ENCODE measurements at regions of chr12 and their contacts with region 1.

Region 1: GRCh38 chr12:64347630-64348029 is 42.9 kb downstream of the C12orf56 start:
- DNase-seq: no peak
- H3K4me3 ChIP-seq: no peak overlapping the region
- H3K27ac ChIP-seq: no peak overlapping the region
- H3K4me1 ChIP-seq: no peaks in the 10 kb centered on the region
- H3K27me3 ChIP-seq: no peaks in the 10 kb centered on the region
- CTCF ChIP-seq: no peak
- POLR2A ChIP-seq: no peak

Region 2: GRCh38 chr12:64065881-64066451 is 281.7 kb before region 1 on chr12:
- CTCF ChIA-PET with region 1: no interaction called
- POLR2A ChIA-PET with region 1: no interaction called
- dilution Hi-C with region 1: no loop called
- intact Hi-C with region 1: no loop called
- DNase-seq: no peak
- H3K4me3 ChIP-seq: no peak overlapping the region
- H3K27ac ChIP-seq: no peak overlapping the region
- H3K4me1 ChIP-seq: no peaks in the 10 kb centered on the region
- H3K27me3 ChIP-seq: no peaks in the 10 kb centered on the region
- CTCF ChIP-seq: no peak
- POLR2A ChIP-seq: no peak

Region 3: GRCh38 chr12:64099397-64099796 is 248.2 kb before region 1 on chr12:
- CTCF ChIA-PET with region 1: no interaction called
- POLR2A ChIA-PET with region 1: no interaction called
- dilution Hi-C with region 1: no loop called
- intact Hi-C with region 1: no loop called
- DNase-seq: peak; percentile 70
- H3K4me3 ChIP-seq: no peak overlapping the region
- H3K27ac ChIP-seq: no peak overlapping the region
- H3K4me1 ChIP-seq: no peaks in the 10 kb centered on the region
- H3K27me3 ChIP-seq: no peaks in the 10 kb centered on the region
- CTCF ChIP-seq: no peak
- POLR2A ChIP-seq: no peak

Region 4: DNA sequence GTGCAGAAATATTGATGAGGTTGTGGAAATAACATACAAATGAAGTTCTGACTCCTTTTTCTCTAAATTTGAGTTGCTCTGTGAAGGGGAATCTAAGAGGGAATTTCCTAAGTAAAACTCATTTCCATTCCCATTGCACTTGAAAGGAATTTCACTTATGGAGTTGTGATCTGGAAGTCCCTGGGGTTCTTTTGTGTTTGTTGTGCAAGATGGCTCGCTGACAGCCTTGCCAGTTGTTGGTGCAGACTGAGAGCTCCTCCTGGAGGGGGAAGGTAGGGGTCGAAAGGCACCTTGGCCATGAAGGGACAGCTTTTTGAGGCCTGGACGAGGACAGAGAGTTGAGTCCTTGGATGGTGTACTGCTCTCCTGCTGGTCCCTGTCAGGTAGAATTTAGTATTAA is 29.0 kb before region 1 on chr12:
- CTCF ChIA-PET with region 1: no interaction called
- POLR2A ChIA-PET with region 1: no interaction called
- dilution Hi-C with region 1: no loop called
- intact Hi-C with region 1: loop called (anchors 2 kb)
- DNase-seq: peak; percentile 11
- H3K4me3 ChIP-seq: no peak overlapping the region
- H3K27ac ChIP-seq: no peak overlapping the region
- H3K4me1 ChIP-seq: no peaks in the 10 kb centered on the region
- H3K27me3 ChIP-seq: peaks cover 0 to 3% of the 10 kb centered on the region in 2 experiments
- CTCF ChIP-seq: no peak
- POLR2A ChIP-seq: no peak

Region 5: GRCh38 chr12:64332938-64333337 is 14.7 kb before region 1 on chr12:
- CTCF ChIA-PET with region 1: no interaction called
- POLR2A ChIA-PET with region 1: no interaction called
- dilution Hi-C with region 1: no loop called
- intact Hi-C with region 1: no loop called
- DNase-seq: no peak
- H3K4me3 ChIP-seq: no peak overlapping the region
- H3K27ac ChIP-seq: no peak overlapping the region
- H3K4me1 ChIP-seq: no peaks in the 10 kb centered on the region
- H3K27me3 ChIP-seq: no peaks in the 10 kb centered on the region
- CTCF ChIP-seq: no peak
- POLR2A ChIP-seq: no peak